ENCODE measurements at regions of chr6 and their contacts with region 1.

Region 1: DNA sequence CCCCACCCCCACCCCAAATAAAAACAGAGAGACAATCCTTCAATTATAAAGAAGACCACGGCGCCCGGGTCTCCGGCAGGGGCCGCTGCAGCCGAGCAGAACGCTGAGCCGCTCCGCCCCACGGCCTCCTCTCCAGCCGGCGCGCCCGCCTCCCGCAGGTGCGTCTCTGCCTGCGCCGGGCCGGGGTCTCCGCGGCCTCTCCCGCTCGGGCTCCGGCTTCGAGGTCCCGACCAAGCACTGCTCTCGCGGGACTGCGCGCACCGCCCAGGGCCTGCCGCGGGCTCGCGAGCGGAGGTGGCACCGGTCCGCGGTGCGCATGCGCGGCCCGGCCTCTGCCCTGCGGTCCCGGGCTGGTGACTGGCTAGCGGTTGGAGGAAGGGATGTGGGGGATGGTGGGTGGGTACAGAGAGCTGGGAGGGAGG is 241 bp upstream of the SIRT5 start:
- DNase-seq: peak; percentile 94
- ATAC-seq: peak; percentile 81
- H3K4me3 Mint-ChIP-seq: peak overlapping the region; percentile 93
- H3K27ac Mint-ChIP-seq: peak overlapping the region; percentile 98
- H3K4me1 Mint-ChIP-seq: peaks cover 20% of the 10 kb centered on the region
- H3K27me3 Mint-ChIP-seq: peaks cover 2% of the 10 kb centered on the region

Region 2: DNA sequence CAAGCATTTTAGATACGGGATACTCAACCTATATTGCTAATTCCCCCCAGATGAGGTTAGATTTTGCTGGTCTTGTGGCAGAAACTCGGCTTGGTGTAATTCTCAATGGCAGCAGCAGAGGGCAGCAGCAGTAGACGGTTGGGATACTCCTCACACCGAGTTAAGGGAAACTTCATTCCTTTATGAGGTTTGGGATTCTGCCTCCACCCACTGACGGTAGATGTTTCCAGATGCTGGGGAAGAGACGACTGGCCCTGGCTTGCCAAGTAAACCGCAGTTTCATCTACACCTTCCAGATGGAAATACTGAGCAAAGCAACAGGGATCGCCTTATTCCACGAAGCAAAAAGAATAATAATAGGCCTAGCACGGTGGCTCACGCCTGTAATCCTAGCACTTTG is 237.6 kb before region 1 on chr6:
- CTCF ChIA-PET with region 1: interaction called, 62 read pairs
- POLR2A ChIA-PET with region 1: interaction called, 5 read pairs
- DNase-seq: peak; percentile 85
- ATAC-seq: peak; percentile 60
- H3K4me3 Mint-ChIP-seq: no peak overlapping the region
- H3K27ac Mint-ChIP-seq: no peak overlapping the region
- H3K4me1 Mint-ChIP-seq: peaks cover 32% of the 10 kb centered on the region
- H3K27me3 Mint-ChIP-seq: peaks cover 6% of the 10 kb centered on the region

Region 3: DNA sequence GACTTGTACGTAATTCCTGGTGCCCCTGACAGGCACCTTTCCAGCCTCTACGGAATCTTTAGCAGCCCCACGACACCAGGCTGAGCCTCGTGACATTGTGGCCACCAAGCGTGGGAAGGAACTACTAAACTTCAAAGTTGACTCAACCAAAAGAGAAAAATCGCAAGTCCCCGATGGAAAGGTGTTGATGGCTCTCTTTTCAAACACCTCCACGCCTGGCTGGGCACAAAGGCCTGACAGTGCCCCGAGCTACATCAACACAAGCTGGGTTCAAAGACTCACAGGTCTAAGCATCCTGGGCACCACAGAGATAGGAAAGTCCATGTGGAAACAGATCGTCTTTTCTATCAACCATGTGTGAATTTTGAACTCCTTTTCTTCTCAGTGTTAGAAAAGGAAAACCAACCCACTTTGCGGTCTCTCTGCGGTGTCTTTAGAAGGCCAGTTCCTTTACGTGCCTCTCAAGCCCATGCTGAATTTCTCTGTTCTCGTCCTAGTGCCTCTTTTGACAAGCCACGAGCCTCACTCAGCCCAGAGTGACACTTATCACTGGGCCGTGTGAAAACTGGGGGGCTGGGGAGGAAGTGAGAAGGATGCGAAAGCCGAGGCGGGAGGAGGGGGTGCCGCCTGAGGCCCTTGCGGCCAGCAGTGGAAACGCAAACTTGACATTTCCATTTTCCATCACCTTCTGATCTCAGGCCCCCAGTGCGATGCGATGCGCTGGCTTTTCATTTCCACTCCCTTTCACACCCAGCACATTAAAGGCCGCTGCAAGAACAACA is 146.2 kb before region 1 on chr6:
- CTCF ChIA-PET with region 1: interaction called, 16 read pairs
- POLR2A ChIA-PET with region 1: interaction called, 4 read pairs
- DNase-seq: peak; percentile 87
- ATAC-seq: peak; percentile 81
- H3K4me3 Mint-ChIP-seq: peak overlapping the region; percentile 57
- H3K27ac Mint-ChIP-seq: peak overlapping the region; percentile 93
- H3K4me1 Mint-ChIP-seq: peaks cover 74% of the 10 kb centered on the region
- H3K27me3 Mint-ChIP-seq: no peaks in the 10 kb centered on the region

Region 4: GRCh38 chr6:13507306-13507860 is 66.8 kb before region 1 on chr6:
- CTCF ChIA-PET with region 1: no interaction called
- POLR2A ChIA-PET with region 1: no interaction called
- DNase-seq: no peak
- ATAC-seq: no peak
- H3K4me3 Mint-ChIP-seq: no peak overlapping the region
- H3K27ac Mint-ChIP-seq: no peak overlapping the region
- H3K4me1 Mint-ChIP-seq: peaks cover 2% of the 10 kb centered on the region
- H3K27me3 Mint-ChIP-seq: peaks cover 15% of the 10 kb centered on the region

Region 5: GRCh38 chr6:13538084-13538483 is 36.1 kb before region 1 on chr6:
- CTCF ChIA-PET with region 1: interaction called, 13 read pairs
- POLR2A ChIA-PET with region 1: no interaction called
- DNase-seq: no peak
- ATAC-seq: no peak
- H3K4me3 Mint-ChIP-seq: no peak overlapping the region
- H3K27ac Mint-ChIP-seq: no peak overlapping the region
- H3K4me1 Mint-ChIP-seq: peaks cover 3% of the 10 kb centered on the region
- H3K27me3 Mint-ChIP-seq: peaks cover 5% of the 10 kb centered on the region

Region 6: DNA sequence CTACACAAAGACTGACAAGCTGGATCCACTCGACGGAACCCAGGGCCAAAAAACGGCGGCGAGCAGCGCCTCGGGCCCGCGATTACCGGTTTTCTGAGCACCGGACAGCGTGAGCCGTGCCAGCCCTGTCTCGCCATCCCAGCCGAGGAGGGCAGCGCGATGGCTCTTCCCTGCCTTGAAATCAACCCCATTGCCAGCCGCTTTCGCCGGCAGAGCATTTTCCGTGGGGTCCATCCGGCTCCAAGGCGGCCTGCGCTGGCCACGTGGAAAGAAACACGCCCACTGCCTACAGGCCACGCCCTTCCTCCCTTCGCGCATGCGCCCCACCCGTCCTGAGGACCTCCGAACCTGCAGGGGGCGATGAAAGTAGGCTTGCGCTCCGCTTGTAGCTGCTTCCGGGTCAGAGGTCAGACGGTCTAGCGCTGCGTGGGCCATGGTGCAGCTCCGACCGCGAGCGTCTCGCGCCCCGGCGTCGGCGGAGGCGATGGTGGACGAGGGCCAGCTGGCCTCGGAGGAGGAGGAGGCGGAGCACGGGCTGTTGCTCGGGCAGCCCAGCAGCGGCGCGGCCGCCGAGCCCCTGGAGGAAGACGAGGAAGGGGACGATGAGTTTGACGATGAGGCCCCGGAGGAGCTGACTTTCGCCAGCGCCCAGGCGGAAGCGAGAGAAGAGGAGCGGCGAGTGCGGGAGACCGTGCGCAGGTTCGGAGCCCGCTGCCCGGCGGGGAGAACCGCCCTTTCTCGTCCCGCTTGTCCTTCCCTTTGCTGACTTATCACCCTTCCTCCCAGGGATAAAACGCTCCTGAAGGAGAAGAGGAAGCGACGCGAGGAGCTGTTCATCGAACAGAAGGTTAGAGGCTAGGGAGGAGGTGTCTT is 41.0 kb after region 1 on chr6 and contains the start of gene NOL7:
- CTCF ChIA-PET with region 1: interaction called, 81 read pairs
- POLR2A ChIA-PET with region 1: interaction called, 31 read pairs
- DNase-seq: peak; percentile 99
- ATAC-seq: peak; percentile 93
- H3K4me3 Mint-ChIP-seq: peak within 1 kb of the TSS; percentile 99
- H3K27ac Mint-ChIP-seq: peak within 1 kb of the TSS; percentile 96
- H3K4me1 Mint-ChIP-seq: peaks cover 45% of the 10 kb centered on the region
- H3K27me3 Mint-ChIP-seq: no peaks in the 10 kb centered on the region
- total RNA-seq, gene NOL7: 67.3 to 71.6 TPM

Measured in activated CD8-positive, alpha-beta T cell treated with anti-CD3 and anti-CD28 coated beads, Interleukin-2, amount 10 ng/mL, durations not matched to agents 7 days and 5 days (primary cell).